ENCODE measurements at regions of chr18 and their contacts with region 1.

Region 1: GRCh38 chr18:64734063-64734462 is 585.2 kb upstream of the LINC00305 start:
- DNase-seq: no peak
- ATAC-seq: no peak
- H3K4me3 ChIP-seq: no peak overlapping the region
- H3K4me3 Mint-ChIP-seq: no peak overlapping the region
- H3K27ac ChIP-seq: no peak overlapping the region
- H3K27ac Mint-ChIP-seq: no peak overlapping the region
- H3K4me1 ChIP-seq: no peaks in the 10 kb centered on the region
- H3K4me1 Mint-ChIP-seq: no peaks in the 10 kb centered on the region
- H3K27me3 ChIP-seq: no peaks in the 10 kb centered on the region
- H3K27me3 Mint-ChIP-seq: no peaks in the 10 kb centered on the region
- CTCF ChIP-seq: no peak

Region 2: GRCh38 chr18:64799378-64799777 is 65.3 kb after region 1 on chr18:
- CTCF ChIA-PET with region 1: no interaction called
- POLR2A ChIA-PET with region 1: no interaction called
- intact Hi-C with region 1: loop called in 1 of 2 experiments (anchors 10 kb)
- DNase-seq: no peak
- ATAC-seq: no peak
- H3K4me3 ChIP-seq: no peak overlapping the region
- H3K4me3 Mint-ChIP-seq: no peak overlapping the region
- H3K27ac ChIP-seq: no peak overlapping the region
- H3K27ac Mint-ChIP-seq: no peak overlapping the region
- H3K4me1 ChIP-seq: no peaks in the 10 kb centered on the region
- H3K4me1 Mint-ChIP-seq: no peaks in the 10 kb centered on the region
- H3K27me3 ChIP-seq: no peaks in the 10 kb centered on the region
- H3K27me3 Mint-ChIP-seq: no peaks in the 10 kb centered on the region
- CTCF ChIP-seq: no peak